ENCODE measurements at regions of chr19 and their contacts with region 1.

Region 1: GRCh38 chr19:10717356-10718204 is at the start of gene DNM2:
- DNase-seq: peak; percentile 99
- H3K4me3 Mint-ChIP-seq: peak within 1 kb of the TSS; percentile 95
- H3K27ac Mint-ChIP-seq: peak within 1 kb of the TSS; percentile 80
- H3K4me1 Mint-ChIP-seq: peaks cover 17% of the 10 kb centered on the region
- H3K27me3 Mint-ChIP-seq: no peaks in the 10 kb centered on the region
- total RNA-seq, gene DNM2: 185 and 198 TPM in 2 replicates

Region 2: GRCh38 chr19:10756371-10756770 is 38.8 kb after region 1 on chr19:
- intact Hi-C with region 1: loop called (anchors 1 kb)
- DNase-seq: no peak
- H3K4me3 Mint-ChIP-seq: peak overlapping the region; percentile 26
- H3K27ac Mint-ChIP-seq: peak overlapping the region; percentile 56
- H3K4me1 Mint-ChIP-seq: peaks cover 58% of the 10 kb centered on the region
- H3K27me3 Mint-ChIP-seq: no peaks in the 10 kb centered on the region

Region 3: GRCh38 chr19:10769533-10770491 is 52.2 kb after region 1 on chr19:
- intact Hi-C with region 1: loop called (anchors 1 kb)
- DNase-seq: no peak
- H3K4me3 Mint-ChIP-seq: no peak overlapping the region
- H3K27ac Mint-ChIP-seq: peak overlapping the region; percentile 45
- H3K4me1 Mint-ChIP-seq: peaks cover 18% of the 10 kb centered on the region
- H3K27me3 Mint-ChIP-seq: no peaks in the 10 kb centered on the region

Region 4: DNA sequence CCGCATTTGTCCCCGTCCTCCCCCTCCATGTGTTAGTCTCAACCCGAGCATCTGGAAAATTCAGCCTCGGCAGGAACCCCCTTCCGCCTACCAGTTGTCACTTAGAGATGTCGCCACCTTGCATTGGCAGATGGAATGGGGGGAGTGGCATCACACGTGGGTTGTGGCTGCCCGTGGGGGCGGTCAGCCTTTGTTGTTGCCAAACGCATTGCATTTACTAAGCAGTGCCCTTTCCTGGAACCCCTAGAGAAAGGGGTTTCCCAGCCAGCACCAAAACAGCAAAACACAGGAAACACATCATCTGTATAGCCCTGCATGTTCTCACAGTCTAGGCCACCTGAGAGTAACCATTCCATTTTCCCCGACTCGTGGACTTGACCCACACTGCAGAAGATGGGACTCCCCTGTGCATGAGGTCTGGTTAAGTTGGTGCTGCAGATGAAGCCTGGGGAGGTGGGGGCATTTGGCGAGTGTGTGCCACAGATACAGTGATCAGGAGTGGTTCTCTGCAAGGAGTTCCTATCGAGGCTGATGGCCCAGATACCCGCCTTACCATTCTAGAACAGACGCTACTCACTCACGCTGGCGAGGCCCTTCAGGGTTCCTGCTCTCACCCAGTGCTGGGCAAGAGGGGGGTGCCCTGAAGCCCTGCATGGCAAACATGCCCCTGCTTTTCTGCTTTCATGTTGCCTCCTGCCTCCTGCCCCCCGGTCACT is 80.1 kb after region 1 on chr19:
- intact Hi-C with region 1: loop called (anchors 1 kb)
- DNase-seq: peak; percentile 73
- H3K4me3 Mint-ChIP-seq: peak overlapping the region; percentile 73
- H3K27ac Mint-ChIP-seq: peak overlapping the region; percentile 97
- H3K4me1 Mint-ChIP-seq: peaks cover 17% of the 10 kb centered on the region
- H3K27me3 Mint-ChIP-seq: no peaks in the 10 kb centered on the region

Region 5: GRCh38 chr19:10812902-10813404 is 95.4 kb after region 1 on chr19:
- intact Hi-C with region 1: loop called (anchors 5 kb)
- DNase-seq: no peak
- H3K4me3 Mint-ChIP-seq: no peak overlapping the region
- H3K27ac Mint-ChIP-seq: peak overlapping the region; percentile 91
- H3K4me1 Mint-ChIP-seq: peaks cover 22% of the 10 kb centered on the region
- H3K27me3 Mint-ChIP-seq: no peaks in the 10 kb centered on the region

Region 6: GRCh38 chr19:10835754-10836477 is 118.3 kb after region 1 on chr19 and contains the start of gene TMED1:
- intact Hi-C with region 1: loop called (anchors 1 kb)
- DNase-seq: peak; percentile 95
- H3K4me3 Mint-ChIP-seq: peak within 1 kb of the TSS; percentile 92
- H3K27ac Mint-ChIP-seq: peak within 1 kb of the TSS; percentile 99
- H3K4me1 Mint-ChIP-seq: peaks cover 10% of the 10 kb centered on the region
- H3K27me3 Mint-ChIP-seq: no peaks in the 10 kb centered on the region
- total RNA-seq, gene TMED1: 16.7 and 17.9 TPM in 2 replicates

Region 7: GRCh38 chr19:10864538-10864899 is 146.9 kb after region 1 on chr19:
- intact Hi-C with region 1: loop called (anchors 1 kb)
- DNase-seq: peak; percentile 75
- H3K4me3 Mint-ChIP-seq: no peak overlapping the region
- H3K27ac Mint-ChIP-seq: peak overlapping the region; percentile 60
- H3K4me1 Mint-ChIP-seq: peaks cover 17% of the 10 kb centered on the region
- H3K27me3 Mint-ChIP-seq: no peaks in the 10 kb centered on the region

Measured in activated T-helper 2 cell treated with anti-CD3 and anti-CD28 coated beads, Interferon-gamma antibody, Interleukin-2, Interleukin-4, amounts not matched to agents 10 μg/mL and 5 μg/mL and 100 μg/mL, durations not matched to agents 14 hours and 24 hours and 36 hours (primary cell).